ENCODE measurements at regions of chr4 and their contacts with region 1.

Region 1: GRCh38 chr4:77156533-77156911 is 485 bp upstream of the CCNG2 start:
- DNase-seq: peak; percentile 100
- H3K4me3 ChIP-seq: peak overlapping the region; percentile 96
- H3K27ac ChIP-seq: peak overlapping the region; percentile 98
- H3K4me1 ChIP-seq: peaks cover 65% of the 10 kb centered on the region
- CTCF ChIP-seq: no peak

Region 2: GRCh38 chr4:77052352-77052751 is 104.2 kb before region 1 on chr4:
- CTCF ChIA-PET with region 1: no interaction called
- POLR2A ChIA-PET with region 1: interaction called, 7 read pairs
- intact Hi-C with region 1: loop called (anchors 2 kb)
- DNase-seq: peak; percentile 67
- H3K4me3 ChIP-seq: no peak overlapping the region
- H3K27ac ChIP-seq: no peak overlapping the region
- H3K4me1 ChIP-seq: no peaks in the 10 kb centered on the region
- CTCF ChIP-seq: peak; percentile 90

Region 3: DNA sequence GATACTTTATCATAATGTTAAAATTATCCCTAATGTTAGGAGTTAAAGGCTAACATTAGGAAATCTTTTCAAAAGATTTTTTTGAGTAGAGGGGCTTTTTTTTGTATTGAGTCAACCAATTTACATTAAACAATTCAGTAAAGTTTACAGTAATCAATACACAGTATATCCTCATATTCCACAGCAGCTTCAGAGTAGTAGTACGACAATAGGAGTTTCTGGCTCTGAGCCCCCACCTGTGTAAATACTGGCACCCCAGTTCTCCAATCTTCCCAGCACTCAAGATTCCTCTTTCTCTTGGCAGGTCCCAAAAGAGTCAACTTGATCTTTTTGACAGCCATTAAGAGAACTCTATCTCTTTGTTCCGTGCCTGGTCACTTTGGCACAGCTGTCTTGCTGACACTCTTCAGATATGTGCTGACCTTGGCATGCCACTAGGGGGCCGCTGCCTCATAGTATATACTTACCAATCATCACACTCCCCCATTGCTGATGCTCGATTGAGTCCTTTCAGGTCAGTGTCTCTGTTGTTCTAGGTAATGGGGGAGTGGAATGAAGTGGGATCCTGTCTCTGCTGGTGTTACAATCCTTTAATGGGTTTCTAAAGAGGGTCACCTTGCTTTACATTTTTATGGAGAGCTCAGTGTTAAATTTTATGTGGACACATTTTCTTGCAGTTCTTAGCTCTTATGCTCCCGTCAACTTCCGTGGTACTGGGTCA is 61.3 kb before region 1 on chr4:
- CTCF ChIA-PET with region 1: interaction called, 26 read pairs
- POLR2A ChIA-PET with region 1: interaction called, 63 read pairs
- intact Hi-C with region 1: loop called (anchors 1 kb)
- DNase-seq: peak; percentile 87
- H3K4me3 ChIP-seq: no peak overlapping the region
- H3K27ac ChIP-seq: no peak overlapping the region
- H3K4me1 ChIP-seq: peaks cover 26% of the 10 kb centered on the region
- CTCF ChIP-seq: peak; percentile 98

Region 4: DNA sequence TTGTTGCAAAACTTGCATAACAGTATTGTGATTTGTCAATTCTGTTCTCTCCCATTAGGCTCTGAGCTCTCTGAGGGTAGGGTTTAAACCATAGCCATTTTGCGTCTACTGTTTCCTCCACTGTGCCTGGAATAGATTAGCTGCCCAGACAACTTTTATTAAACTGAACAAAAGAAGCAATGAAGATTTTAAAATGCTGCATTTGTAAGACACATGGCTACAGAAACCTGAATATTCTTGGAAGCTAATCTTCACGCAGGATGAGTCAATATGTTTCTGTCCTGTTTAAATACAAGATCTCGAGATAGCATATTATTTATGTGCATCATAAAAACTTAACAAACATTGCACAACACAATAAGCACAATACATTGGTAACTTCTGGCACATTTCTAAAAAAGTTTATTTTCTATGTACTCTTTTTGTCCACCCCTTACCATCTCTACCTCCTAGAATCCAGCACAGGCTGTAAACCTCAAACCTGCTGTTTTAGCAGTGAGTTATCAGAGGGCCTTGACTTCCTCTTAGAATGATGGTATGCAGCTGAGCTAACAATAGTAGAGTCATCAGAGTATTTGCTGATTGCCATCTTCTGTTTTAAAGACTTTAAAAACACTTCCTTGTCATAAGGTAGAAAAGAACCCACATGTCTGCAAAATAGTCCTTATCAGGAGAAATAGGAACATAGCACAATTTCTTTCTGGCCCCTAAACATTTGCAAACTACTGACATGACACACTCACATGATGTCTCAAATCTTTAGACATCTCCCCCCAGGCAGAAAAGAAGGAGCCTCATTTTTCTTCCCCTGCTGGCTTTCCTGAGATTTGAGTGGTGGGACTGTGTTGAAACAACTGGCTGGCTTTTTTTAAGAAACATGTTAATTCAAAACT is 10.1 kb before region 1 on chr4:
- CTCF ChIA-PET with region 1: interaction called, 3 read pairs
- POLR2A ChIA-PET with region 1: interaction called, 213 read pairs
- intact Hi-C with region 1: no loop called
- DNase-seq: peak; percentile 59
- H3K4me3 ChIP-seq: no peak overlapping the region
- H3K27ac ChIP-seq: peak overlapping the region; percentile 38
- H3K4me1 ChIP-seq: peaks cover 52% of the 10 kb centered on the region
- CTCF ChIP-seq: no peak